ENCODE measurements at regions of chr1 and their contacts with region 1.

Region 1: GRCh38 chr1:210373885-210374599 is 45.3 kb downstream of the HHAT start:
- DNase-seq: peak; percentile 65
- H3K4me3 ChIP-seq: no peak overlapping the region
- H3K27ac ChIP-seq: peak overlapping the region; percentile 94
- H3K4me1 ChIP-seq: peaks cover 7% of the 10 kb centered on the region
- H3K27me3 ChIP-seq: no peaks in the 10 kb centered on the region
- CTCF ChIP-seq: peak; percentile 73 to 97
- POLR2A ChIP-seq: peak; percentile 100

Region 2: DNA sequence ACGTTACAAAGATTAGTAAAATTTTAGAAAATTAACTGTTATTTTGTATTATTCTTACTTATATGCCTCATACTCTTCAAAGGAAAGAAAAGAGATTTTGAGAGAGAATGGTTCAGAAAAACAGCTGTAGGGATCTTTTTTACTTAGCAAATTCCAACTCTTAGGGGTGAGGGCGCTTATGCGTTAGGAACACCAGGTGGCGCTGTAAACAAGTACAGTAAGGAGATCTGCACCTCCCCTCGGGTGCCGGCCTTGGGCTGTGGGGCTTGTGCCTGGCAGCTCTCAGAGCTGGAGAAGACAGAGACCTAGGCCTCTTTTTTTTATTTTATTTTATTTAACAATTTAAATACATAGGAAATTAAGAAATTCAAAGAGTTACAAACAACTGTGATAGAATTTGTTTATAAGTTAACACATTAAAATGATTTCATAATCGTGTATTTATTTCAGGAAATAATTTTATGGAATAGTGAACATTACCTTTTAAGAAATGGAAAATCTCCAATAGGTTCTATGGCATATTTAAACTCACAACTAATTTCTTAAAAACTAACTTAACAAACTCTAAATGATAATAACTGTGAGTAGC is 513.7 kb before region 1 on chr1:
- CTCF ChIA-PET with region 1: no interaction called
- POLR2A ChIA-PET with region 1: no interaction called
- dilution Hi-C with region 1: no loop called
- intact Hi-C with region 1: loop called (anchors 10 kb)
- DNase-seq: peak; percentile 78
- H3K4me3 ChIP-seq: no peak overlapping the region
- H3K27ac ChIP-seq: no peak overlapping the region
- H3K4me1 ChIP-seq: peaks cover 2% of the 10 kb centered on the region
- H3K27me3 ChIP-seq: peaks cover 11% of the 10 kb centered on the region in 2 experiments
- CTCF ChIP-seq: peak; percentile 83 to 85
- POLR2A ChIP-seq: no peak

Region 3: GRCh38 chr1:210233216-210234020 is 140.6 kb before region 1 on chr1:
- CTCF ChIA-PET with region 1: no interaction called
- POLR2A ChIA-PET with region 1: interaction called, 9 read pairs
- dilution Hi-C with region 1: no loop called
- intact Hi-C with region 1: loop called (anchors 1 kb)
- DNase-seq: peak; percentile 86
- H3K4me3 ChIP-seq: peak overlapping the region; percentile 66 to 80 (median 74)
- H3K27ac ChIP-seq: peak overlapping the region; percentile 83
- H3K4me1 ChIP-seq: peaks cover 35% of the 10 kb centered on the region
- H3K27me3 ChIP-seq: peaks cover 0 to 5% of the 10 kb centered on the region in 2 experiments
- CTCF ChIP-seq: no peak
- POLR2A ChIP-seq: peak; percentile 32

Region 4: GRCh38 chr1:210250998-210251679 is 122.9 kb before region 1 on chr1:
- CTCF ChIA-PET with region 1: no interaction called
- POLR2A ChIA-PET with region 1: no interaction called
- dilution Hi-C with region 1: no loop called
- intact Hi-C with region 1: loop called (anchors 1 kb)
- DNase-seq: peak; percentile 72
- H3K4me3 ChIP-seq: peak overlapping the region; percentile 34 to 57 (median 37)
- H3K27ac ChIP-seq: peak overlapping the region; percentile 39
- H3K4me1 ChIP-seq: peaks cover 20% of the 10 kb centered on the region
- H3K27me3 ChIP-seq: peaks cover 0 to 8% of the 10 kb centered on the region in 2 experiments
- CTCF ChIP-seq: no peak
- POLR2A ChIP-seq: no peak

Region 5: DNA sequence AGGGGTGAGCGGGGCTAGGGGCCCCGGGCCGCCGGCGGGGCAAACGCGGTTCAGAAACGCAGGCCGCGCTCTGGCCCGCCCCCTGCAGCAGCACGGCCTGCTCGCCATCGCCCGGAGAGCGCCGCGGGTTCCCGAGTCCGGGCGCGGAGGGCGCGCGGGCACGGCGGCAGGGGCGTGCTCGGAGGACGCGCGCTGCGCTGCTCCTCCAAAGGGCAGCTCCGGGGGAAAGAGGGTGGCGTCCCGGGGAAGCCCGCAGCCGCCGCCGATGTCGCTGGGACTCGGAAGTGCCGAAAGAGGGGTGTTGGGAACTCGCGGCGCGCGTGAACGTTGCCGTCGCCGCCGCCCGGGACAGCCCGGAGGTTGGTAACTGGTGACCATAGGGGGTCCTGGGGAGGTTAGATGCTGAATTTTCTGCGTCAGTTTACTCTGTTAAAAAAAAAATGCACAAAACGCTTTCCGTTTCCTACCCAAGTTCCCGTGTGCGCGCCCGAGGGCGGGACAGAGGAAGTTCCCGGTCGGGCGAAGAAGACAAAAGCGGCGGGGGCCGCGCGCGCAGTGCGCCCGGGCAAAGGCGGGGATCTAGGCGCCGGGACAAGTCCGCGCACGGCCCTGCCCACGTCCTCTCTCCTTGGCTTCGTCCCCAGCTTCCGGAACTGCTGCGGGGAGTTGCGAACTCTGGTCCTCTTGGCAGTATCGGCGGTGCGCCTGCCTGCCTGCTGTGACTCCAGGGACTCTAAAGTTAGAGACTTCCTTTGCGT is 45.1 kb before region 1 on chr1 and contains the start of gene HHAT:
- CTCF ChIA-PET with region 1: no interaction called
- POLR2A ChIA-PET with region 1: no interaction called
- dilution Hi-C with region 1: no loop called
- intact Hi-C with region 1: loop called (anchors 1 kb)
- DNase-seq: peak; percentile 59
- H3K4me3 ChIP-seq: peak within 1 kb of the TSS; percentile 46 to 82 (median 55)
- H3K27ac ChIP-seq: peak within 1 kb of the TSS; percentile 75
- H3K4me1 ChIP-seq: peaks cover 6% of the 10 kb centered on the region
- H3K27me3 ChIP-seq: peaks cover 0 to 2% of the 10 kb centered on the region in 2 experiments
- CTCF ChIP-seq: no peak
- POLR2A ChIP-seq: no peak
- total RNA-seq, gene HHAT: 2.4 TPM in 2 replicates

Region 6: GRCh38 chr1:210384630-210385029 is 10.6 kb after region 1 on chr1:
- CTCF ChIA-PET with region 1: interaction called, 11 read pairs
- POLR2A ChIA-PET with region 1: no interaction called
- dilution Hi-C with region 1: no loop called
- intact Hi-C with region 1: no loop called
- DNase-seq: no peak
- H3K4me3 ChIP-seq: no peak overlapping the region
- H3K27ac ChIP-seq: no peak overlapping the region
- H3K4me1 ChIP-seq: no peaks in the 10 kb centered on the region
- H3K27me3 ChIP-seq: no peaks in the 10 kb centered on the region
- CTCF ChIP-seq: no peak
- POLR2A ChIP-seq: no peak

Region 7: DNA sequence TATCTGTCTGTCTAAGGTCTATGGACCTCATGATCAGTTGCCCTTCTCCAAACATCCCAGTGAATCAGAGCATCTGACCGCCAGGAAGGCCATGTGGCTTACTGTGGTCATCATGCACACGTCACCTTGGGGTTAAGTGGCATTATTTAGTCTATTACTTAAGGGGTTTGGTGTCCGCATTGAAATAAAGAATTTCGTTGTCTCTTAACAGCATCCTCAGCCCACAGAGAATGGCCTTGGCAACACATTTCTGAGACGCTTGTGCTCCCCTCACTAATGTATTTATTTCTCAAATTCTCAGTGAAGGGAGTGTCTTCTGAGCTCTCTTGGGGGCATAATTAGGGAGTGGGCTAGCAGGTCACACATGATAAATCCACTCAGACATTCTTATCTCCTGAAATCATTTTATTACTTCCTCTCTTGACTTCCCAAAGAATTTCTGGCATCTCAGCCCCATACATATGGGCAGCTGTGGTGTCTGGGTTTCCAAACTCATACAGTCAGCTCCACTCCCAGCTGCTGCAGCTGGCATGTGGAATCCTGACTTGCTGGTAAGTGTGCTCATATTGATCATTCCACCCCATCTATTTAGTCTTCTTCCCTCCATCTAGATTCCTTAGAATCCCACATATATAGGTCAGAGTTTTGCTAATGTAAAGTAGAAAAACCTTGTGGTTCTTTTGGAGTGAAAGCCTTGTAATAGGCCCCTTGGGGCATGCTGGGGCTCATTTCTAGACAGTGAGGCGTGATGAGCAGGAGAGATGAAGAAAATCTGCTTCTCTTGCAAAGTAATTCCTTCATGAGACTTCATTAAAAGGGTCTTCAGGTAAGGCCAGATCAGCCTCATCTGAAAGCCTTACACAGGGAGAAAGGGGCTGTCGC is 65.1 kb after region 1 on chr1:
- CTCF ChIA-PET with region 1: no interaction called
- POLR2A ChIA-PET with region 1: no interaction called
- dilution Hi-C with region 1: no loop called
- intact Hi-C with region 1: loop called (anchors 1 kb)
- DNase-seq: peak; percentile 34
- H3K4me3 ChIP-seq: no peak overlapping the region
- H3K27ac ChIP-seq: peak overlapping the region; percentile 67
- H3K4me1 ChIP-seq: peaks cover 14% of the 10 kb centered on the region
- H3K27me3 ChIP-seq: no peaks in the 10 kb centered on the region
- CTCF ChIP-seq: no peak
- POLR2A ChIP-seq: no peak

Region 8: DNA sequence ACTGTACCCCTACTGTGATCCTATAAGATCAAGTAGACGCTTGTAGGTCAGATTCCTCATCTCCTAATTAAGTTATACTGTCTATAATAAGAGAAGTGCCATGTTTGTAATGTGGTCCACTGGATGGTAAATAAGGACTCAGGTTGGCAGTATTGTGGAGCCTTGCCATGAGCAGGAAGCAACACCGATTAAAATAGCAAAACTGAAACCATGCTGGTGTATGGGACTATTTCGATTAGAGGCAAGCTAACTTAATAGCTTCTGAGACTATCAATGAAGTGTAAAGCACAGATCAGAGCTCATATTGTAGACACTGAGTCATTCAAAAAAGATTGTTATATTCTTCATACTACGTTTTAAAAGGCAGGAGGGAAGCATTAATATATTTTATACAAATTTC is 303.5 kb after region 1 on chr1:
- CTCF ChIA-PET with region 1: no interaction called
- POLR2A ChIA-PET with region 1: no interaction called
- dilution Hi-C with region 1: no loop called
- intact Hi-C with region 1: no loop called
- DNase-seq: no peak
- H3K4me3 ChIP-seq: no peak overlapping the region
- H3K27ac ChIP-seq: no peak overlapping the region
- H3K4me1 ChIP-seq: no peaks in the 10 kb centered on the region
- H3K27me3 ChIP-seq: no peaks in the 10 kb centered on the region
- CTCF ChIP-seq: no peak
- POLR2A ChIP-seq: no peak